ENCODE measurements at regions of chr11 and their contacts with region 1.

Region 1: DNA sequence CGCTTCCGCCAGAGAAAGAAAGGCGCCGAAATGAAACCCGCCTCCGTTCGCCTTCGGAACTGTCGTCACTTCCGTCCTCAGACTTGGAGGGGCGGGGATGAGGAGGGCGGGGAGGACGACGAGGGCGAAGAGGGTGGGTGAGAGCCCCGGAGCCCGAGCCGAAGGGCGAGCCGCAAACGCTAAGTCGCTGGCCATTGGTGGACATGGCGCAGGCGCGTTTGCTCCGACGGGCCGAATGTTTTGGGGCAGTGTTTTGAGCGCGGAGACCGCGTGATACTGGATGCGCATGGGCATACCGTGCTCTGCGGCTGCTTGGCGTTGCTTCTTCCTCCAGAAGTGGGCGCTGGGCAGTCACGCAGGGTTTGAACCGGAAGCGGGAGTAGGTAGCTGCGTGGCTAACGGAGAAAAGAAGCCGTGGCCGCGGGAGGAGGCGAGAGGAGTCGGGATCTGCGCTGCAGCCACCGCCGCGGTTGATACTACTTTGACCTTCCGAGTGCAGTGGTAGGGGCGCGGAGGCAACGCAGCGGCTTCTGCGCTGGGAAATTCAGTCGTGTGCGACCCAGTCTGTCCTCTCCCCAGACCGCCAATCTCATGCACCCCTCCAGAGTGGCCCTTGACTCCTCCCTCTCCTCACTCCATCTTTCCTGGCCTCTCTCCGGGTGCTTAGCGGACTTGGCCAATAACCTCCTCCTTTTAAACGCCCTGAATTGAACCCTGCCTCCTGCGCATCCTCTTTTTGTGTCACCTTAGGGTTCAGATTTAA is at the start of gene ATM:
- DNase-seq: peak; percentile 98
- H3K4me3 Mint-ChIP-seq: no peak within 1 kb of the TSS
- H3K27ac Mint-ChIP-seq: no peak within 1 kb of the TSS
- H3K4me1 Mint-ChIP-seq: peaks cover 40% of the 10 kb centered on the region
- H3K27me3 Mint-ChIP-seq: no peaks in the 10 kb centered on the region
- total RNA-seq, gene ATM: 227 to 242 TPM

Region 2: GRCh38 chr11:108237058-108237481 is 14.2 kb after region 1 on chr11:
- CTCF ChIA-PET with region 1: interaction called, 21 read pairs
- POLR2A ChIA-PET with region 1: interaction called, 7 read pairs
- DNase-seq: no peak
- H3K4me3 Mint-ChIP-seq: peak overlapping the region; percentile 63
- H3K27ac Mint-ChIP-seq: peak overlapping the region; percentile 96
- H3K4me1 Mint-ChIP-seq: peaks cover 84% of the 10 kb centered on the region
- H3K27me3 Mint-ChIP-seq: no peaks in the 10 kb centered on the region

Measured in activated CD4-positive, alpha-beta T cell treated with anti-CD3 and anti-CD28 coated beads, Interleukin-2, amount 10 ng/mL, durations not matched to agents 7 days and 5 days (primary cell).